Motor neuron (in vitro differentiated cells): ENCODE measurements at regions of chr17 and their contacts with region 1.

Region 1: GRCh38 chr17:46179375-46179999 is 13.7 kb downstream of the KANSL1 start:
- ATAC-seq: peak in 1 of 8 experiments; percentile 27
- H3K4me3 ChIP-seq: no peak overlapping the region
- H3K27ac ChIP-seq: no peak overlapping the region
- H3K4me1 ChIP-seq: peaks cover 12 to 17% of the 10 kb centered on the region in 2 donors

Region 2: DNA sequence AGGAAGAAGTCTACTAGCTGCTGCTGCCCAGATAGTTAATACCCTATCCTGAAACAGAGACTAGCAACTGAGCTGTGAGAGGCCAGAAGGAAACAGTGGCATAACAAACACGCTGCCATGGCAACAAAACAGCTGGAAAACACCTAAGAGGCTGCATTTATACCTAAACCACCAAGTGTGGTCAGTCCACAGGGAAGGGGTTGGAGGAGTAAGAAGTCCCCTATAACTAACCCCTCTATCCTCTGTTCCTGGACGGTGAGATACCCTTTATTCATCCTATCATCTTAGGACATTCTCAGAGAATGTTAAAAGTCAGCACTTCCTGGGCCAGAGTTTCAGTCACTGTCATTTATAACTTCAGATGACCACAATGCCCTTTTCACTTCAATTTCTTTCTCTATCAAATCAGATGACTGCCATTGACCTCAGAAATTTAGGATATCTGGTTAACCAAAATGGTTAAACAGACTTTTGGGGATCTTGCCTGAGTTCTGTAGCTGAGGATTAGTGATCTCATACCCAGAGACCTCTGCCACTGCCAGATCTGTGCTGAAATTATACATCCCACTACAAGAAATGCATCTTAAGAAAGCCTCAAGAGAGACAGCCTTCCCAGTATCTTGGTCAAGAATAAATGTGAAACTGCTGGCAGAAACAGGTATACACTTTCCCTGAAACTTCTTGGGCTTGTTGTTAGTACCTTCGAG is 144.2 kb before region 1 on chr17:
- in situ Hi-C with region 1: loop called in 1 of 9 experiments (anchors 10 kb)
- ATAC-seq: no peak
- H3K4me3 ChIP-seq: no peak overlapping the region
- H3K27ac ChIP-seq: no peak overlapping the region
- H3K4me1 ChIP-seq: no peaks in the 10 kb centered on the region

Region 3: DNA sequence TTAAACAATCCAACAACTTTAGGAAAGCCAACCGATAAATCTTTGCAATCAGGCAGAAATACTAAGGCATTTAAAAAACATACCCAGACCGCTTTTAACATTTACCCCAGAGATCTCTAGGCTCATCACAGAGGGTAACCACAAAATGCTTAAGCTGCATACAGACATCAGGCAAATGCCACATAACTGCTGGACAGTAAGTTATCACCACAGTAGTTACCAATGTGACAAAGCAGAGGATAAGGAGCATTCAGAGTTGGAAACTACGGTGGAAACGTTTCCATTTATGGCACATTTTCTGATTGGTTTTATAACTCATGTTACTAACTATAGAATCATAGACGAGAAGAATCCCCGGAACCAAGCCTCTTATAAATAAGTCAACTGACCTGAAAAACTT is 63.8 kb before region 1 on chr17:
- in situ Hi-C with region 1: loop called in 1 of 9 experiments (anchors 10 kb)
- ATAC-seq: no peak
- H3K4me3 ChIP-seq: no peak overlapping the region
- H3K27ac ChIP-seq: no peak overlapping the region
- H3K4me1 ChIP-seq: peaks cover 0 to 3% of the 10 kb centered on the region in 2 donors